Activated CD4-positive, alpha-beta T cell treated with anti-CD3 and anti-CD28 coated beads for 36 hours (primary cell): ENCODE measurements at regions of chr10 and their contacts with region 1.

Region 1: GRCh38 chr10:31101123-31101522 is 69.5 kb upstream of the ZNF438 start:
- DNase-seq: peak; percentile 86
- ATAC-seq: peak; percentile 96
- H3K4me3 Mint-ChIP-seq: no peak overlapping the region
- H3K27ac Mint-ChIP-seq: peak overlapping the region; percentile 91
- H3K4me1 Mint-ChIP-seq: peaks cover 44% of the 10 kb centered on the region
- H3K27me3 Mint-ChIP-seq: no peaks in the 10 kb centered on the region

Region 2: GRCh38 chr10:31146491-31147209 is 45.5 kb after region 1 on chr10:
- CTCF ChIA-PET with region 1: no interaction called
- POLR2A ChIA-PET with region 1: no interaction called
- intact Hi-C with region 1: loop called in 1 of 2 experiments (anchors 2 kb)
- DNase-seq: peak; percentile 45
- ATAC-seq: peak; percentile 73
- H3K4me3 Mint-ChIP-seq: peak overlapping the region; percentile 28
- H3K27ac Mint-ChIP-seq: peak overlapping the region; percentile 74
- H3K4me1 Mint-ChIP-seq: peaks cover 18% of the 10 kb centered on the region
- H3K27me3 Mint-ChIP-seq: no peaks in the 10 kb centered on the region